Activated CD4-positive, alpha-beta memory T cell treated with anti-CD3 and anti-CD28 coated beads for 36 hours (primary cell): ENCODE measurements at regions of chr11 and their contacts with region 1.

Region 1: DNA sequence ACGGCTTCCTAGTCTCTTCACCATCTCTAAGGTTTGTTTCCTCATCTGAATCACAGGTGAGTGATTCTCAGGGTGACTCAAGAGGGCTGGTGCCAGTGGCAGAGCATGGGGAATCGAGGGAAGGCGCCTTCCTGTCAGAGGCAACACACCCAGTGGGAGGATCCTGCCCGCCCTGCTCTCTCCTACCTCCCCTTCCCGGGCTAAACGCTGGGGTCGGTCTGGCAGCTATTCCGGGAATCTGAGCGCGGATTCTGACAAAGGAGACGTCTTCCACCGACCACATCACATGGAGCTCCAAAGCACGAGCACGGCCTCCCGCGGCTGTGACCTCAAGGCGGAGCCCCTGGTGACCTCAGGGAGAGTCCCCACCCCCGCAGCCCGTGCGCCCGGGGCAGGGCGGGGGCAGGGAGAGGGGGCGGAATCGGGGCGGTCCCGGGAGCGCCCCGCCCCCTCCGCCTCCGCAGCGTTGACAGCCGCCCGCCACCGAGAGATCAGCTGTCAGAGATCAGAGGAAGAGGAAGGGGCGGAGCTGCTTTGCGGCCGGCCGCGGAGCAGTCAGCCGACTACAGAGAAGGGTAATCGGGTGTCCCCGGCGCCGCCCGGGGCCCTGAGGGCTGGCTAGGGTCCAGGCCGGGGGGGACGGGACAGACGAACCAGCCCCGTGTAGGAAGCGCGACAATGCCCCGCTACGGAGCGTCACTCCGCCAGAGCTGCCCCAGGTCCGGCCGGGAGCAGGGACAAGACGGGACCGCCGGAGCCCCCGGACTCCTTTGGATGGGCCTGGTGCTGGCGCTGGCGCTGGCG is at the start of gene SMPD1:
- DNase-seq: peak; percentile 96
- H3K4me3 Mint-ChIP-seq: peak within 1 kb of the TSS; percentile 85
- H3K27ac Mint-ChIP-seq: peak within 1 kb of the TSS; percentile 94
- H3K4me1 Mint-ChIP-seq: peaks cover 45% of the 10 kb centered on the region
- H3K27me3 Mint-ChIP-seq: no peaks in the 10 kb centered on the region
- total RNA-seq, gene SMPD1: 23.4 to 23.8 TPM

Region 2: GRCh38 chr11:6402561-6402981 is 12.4 kb after region 1 on chr11:
- CTCF ChIA-PET with region 1: interaction called, 11 read pairs
- POLR2A ChIA-PET with region 1: interaction called, 51 read pairs
- intact Hi-C with region 1: loop called (anchors 1 kb)
- DNase-seq: peak; percentile 88
- H3K4me3 Mint-ChIP-seq: peak overlapping the region; percentile 55
- H3K27ac Mint-ChIP-seq: peak overlapping the region; percentile 90
- H3K4me1 Mint-ChIP-seq: peaks cover 71% of the 10 kb centered on the region
- H3K27me3 Mint-ChIP-seq: no peaks in the 10 kb centered on the region

Region 3: GRCh38 chr11:6419009-6419631 is 29.0 kb after region 1 on chr11 and contains the start of gene APBB1:
- CTCF ChIA-PET with region 1: interaction called, 5 read pairs
- POLR2A ChIA-PET with region 1: interaction called, 18 read pairs
- intact Hi-C with region 1: loop called (anchors 1 kb)
- DNase-seq: peak; percentile 78
- H3K4me3 Mint-ChIP-seq: peak within 1 kb of the TSS; percentile 73
- H3K27ac Mint-ChIP-seq: peak within 1 kb of the TSS; percentile 61
- H3K4me1 Mint-ChIP-seq: peaks cover 8% of the 10 kb centered on the region
- H3K27me3 Mint-ChIP-seq: peaks cover 5% of the 10 kb centered on the region
- total RNA-seq, gene APBB1: 51.6 to 55.3 TPM

Region 4: GRCh38 chr11:6481012-6481923 is 91.1 kb after region 1 on chr11 and contains the starts of genes ARFIP2 and TIMM10B:
- CTCF ChIA-PET with region 1: interaction called, 3 read pairs
- POLR2A ChIA-PET with region 1: interaction called, 14 read pairs
- intact Hi-C with region 1: loop called (anchors 1 kb)
- DNase-seq: peak; percentile 99
- H3K4me3 Mint-ChIP-seq: peak within 1 kb of the TSS; percentile 91
- H3K27ac Mint-ChIP-seq: peak within 1 kb of the TSS; percentile 96
- H3K4me1 Mint-ChIP-seq: peaks cover 35% of the 10 kb centered on the region
- H3K27me3 Mint-ChIP-seq: no peaks in the 10 kb centered on the region
- total RNA-seq, gene ARFIP2: 35.1 to 37.8 TPM
- total RNA-seq, gene TIMM10B: 40.2 to 41.3 TPM

Region 5: DNA sequence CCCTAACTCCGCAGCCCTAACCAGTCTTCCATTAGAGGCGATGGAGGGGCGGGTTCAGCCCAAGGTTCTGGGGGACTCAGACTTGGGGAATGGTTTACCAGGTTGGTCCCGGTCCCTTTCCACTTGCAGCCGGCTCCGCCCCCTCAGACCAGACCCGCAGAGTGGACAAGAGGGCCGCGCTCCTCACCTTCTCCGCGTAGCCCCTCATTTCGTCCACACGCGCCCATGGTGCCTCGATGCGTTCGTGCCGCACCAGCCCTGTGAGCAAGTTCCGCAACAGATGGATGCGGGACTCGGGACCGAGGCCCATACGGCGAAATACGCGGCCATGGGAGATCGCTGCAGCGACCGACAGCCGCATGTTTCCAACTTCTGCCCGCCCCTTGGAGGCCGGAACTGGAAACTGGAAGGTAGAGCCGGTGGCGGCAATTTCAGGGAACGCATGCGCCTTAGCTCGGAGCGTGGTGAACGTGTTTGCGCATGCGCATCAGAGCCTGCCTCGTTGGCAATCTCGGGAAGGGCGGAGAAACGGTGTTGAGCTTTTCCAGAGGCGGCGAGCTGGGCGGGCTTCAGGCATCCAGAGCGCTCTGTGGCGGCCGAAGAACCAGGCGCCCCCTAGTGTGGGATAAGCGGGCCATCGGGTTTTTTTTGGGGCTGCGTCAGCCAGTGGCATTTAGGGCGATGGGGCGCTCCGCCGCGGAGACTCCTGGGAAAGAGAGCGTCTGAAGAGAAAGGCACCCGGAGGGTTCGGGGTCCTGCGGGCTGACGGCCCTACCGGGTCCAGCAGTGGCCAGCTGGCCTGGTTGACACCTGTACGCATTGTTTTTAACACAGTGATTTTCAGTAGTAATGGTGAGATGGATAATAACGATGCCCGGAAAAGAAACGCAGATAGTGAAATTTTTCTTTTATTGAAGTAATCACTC is 293.1 kb after region 1 on chr11 and contains the start of gene MRPL17:
- CTCF ChIA-PET with region 1: no interaction called
- POLR2A ChIA-PET with region 1: interaction called, 3 read pairs
- intact Hi-C with region 1: loop called (anchors 1 kb)
- DNase-seq: peak; percentile 100
- H3K4me3 Mint-ChIP-seq: peak within 1 kb of the TSS; percentile 99
- H3K27ac Mint-ChIP-seq: peak within 1 kb of the TSS; percentile 95
- H3K4me1 Mint-ChIP-seq: peaks cover 36% of the 10 kb centered on the region
- H3K27me3 Mint-ChIP-seq: no peaks in the 10 kb centered on the region
- total RNA-seq, gene MRPL17: 98.5 to 102 TPM

Region 6: DNA sequence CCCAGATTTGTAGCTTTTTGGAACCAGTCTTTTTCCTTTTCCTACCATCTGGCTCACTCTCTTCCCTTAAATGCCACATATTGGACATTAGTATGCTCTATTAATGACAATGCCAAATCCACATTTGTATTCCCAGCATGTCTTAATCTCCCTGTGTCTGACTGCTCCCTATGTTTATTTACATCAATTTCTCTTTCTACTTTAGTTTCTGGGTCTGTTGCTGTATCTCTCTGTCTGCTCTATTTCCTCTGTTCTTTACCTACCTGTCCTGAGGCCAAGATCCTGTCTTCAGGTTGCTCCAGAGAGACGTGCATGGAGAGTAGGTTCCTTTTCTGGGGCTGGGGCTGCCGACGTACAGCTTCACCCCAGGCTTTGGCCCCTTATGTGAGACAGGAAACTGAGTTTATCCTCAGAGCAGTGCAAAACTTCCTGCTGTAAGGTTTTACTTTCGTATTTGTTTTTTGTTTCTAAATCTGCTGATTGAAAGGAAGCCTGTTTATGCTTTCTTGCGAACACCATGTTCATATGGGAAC is 356.0 kb after region 1 on chr11:
- CTCF ChIA-PET with region 1: no interaction called
- POLR2A ChIA-PET with region 1: interaction called, 3 read pairs
- intact Hi-C with region 1: loop called (anchors 5 kb)
- DNase-seq: peak; percentile 52
- H3K4me3 Mint-ChIP-seq: no peak overlapping the region
- H3K27ac Mint-ChIP-seq: no peak overlapping the region
- H3K4me1 Mint-ChIP-seq: peaks cover 32% of the 10 kb centered on the region
- H3K27me3 Mint-ChIP-seq: no peaks in the 10 kb centered on the region